ENCODE measurements at regions of chr9 and their contacts with region 1.

Region 1: GRCh38 chr9:77648234-77649120 is at the start of gene GNA14:
- DNase-seq: peak; percentile 61 to 75
- ATAC-seq: peak; percentile 34 to 74 (median 68)
- H3K4me3 ChIP-seq: peak within 1 kb of the TSS; percentile 67
- H3K27ac ChIP-seq: no peak within 1 kb of the TSS
- H3K4me1 ChIP-seq: peaks cover 7% of the 10 kb centered on the region
- H3K27me3 ChIP-seq: peaks cover 0 to 32% (median 2%) of the 10 kb centered on the region in 3 donors
- CTCF ChIP-seq: no peak
- total RNA-seq, gene GNA14: 0.46 to 1.1 (median 0.68) TPM

Region 2: DNA sequence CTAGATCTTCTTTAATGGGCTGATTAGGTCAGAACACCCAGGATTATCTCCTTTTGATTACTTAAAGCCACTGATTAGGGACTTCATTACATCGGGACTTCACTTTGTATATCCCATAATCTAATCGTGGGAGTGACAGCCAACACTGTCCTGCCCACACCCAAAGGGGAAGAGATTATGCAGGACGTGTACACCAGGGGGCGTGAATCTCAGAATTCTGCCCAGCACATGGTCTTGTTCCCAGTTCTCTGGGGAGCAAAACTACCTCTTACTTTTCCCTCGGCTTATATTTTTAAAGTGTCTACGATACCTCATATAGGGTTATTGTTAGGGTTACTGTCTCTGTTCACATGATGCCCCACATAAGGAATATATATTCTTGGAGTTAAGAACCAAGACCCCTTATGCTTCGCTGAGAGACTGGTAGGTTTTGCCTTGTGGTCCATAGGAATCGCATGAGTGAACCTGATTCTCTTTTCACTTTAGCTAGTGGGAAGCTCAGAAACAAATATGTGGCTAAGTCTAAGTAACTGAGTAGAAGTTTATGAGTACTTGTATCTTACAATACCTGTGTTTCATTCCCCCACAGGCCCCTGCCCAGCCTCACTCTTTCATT is 193.1 kb before region 1 on chr9:
- intact Hi-C with region 1: loop called in 1 of 2 experiments (anchors 2 kb)
- DNase-seq: no peak
- ATAC-seq: no peak
- H3K4me3 ChIP-seq: no peak overlapping the region
- H3K27ac ChIP-seq: no peak overlapping the region
- H3K4me1 ChIP-seq: no peaks in the 10 kb centered on the region
- H3K27me3 ChIP-seq: peaks cover 0 to 1% (median 0%) of the 10 kb centered on the region in 3 donors
- CTCF ChIP-seq: peak; percentile 13